ENCODE measurements at regions of chr17 and their contacts with region 1.

Region 1: GRCh38 chr17:47649153-47649971 is at the start of gene KPNB1:
- DNase-seq: peak; percentile 95
- ATAC-seq: peak; percentile 86
- H3K4me3 Mint-ChIP-seq: peak within 1 kb of the TSS; percentile 92
- H3K27ac Mint-ChIP-seq: peak within 1 kb of the TSS; percentile 96
- H3K4me1 Mint-ChIP-seq: peaks cover 37% of the 10 kb centered on the region
- H3K27me3 Mint-ChIP-seq: no peaks in the 10 kb centered on the region
- total RNA-seq, gene KPNB1: 335 TPM

Region 2: DNA sequence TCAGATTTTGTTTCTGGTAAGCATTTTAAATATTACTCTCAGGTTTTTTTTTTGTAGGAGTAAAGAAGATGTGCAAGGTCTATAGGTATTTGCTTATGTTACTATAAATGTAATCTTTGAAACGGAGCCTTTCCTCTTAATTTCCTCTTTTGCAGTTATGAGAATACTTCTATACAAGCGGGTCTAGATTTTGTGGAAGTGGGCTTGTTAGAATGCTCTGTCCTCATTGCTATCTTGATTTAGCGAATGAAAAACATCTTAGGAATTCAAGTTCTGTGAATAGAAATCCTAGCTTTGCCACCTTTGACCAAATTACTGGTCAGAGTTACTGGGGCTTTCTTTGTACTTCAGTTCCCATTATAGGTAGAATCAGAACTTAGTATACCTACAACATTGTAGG is 245.4 kb before region 1 on chr17:
- POLR2A ChIA-PET with region 1: no interaction called
- DNase-seq: no peak
- ATAC-seq: no peak
- H3K4me3 Mint-ChIP-seq: no peak overlapping the region
- H3K27ac Mint-ChIP-seq: no peak overlapping the region
- H3K4me1 Mint-ChIP-seq: no peaks in the 10 kb centered on the region
- H3K27me3 Mint-ChIP-seq: no peaks in the 10 kb centered on the region

Region 3: DNA sequence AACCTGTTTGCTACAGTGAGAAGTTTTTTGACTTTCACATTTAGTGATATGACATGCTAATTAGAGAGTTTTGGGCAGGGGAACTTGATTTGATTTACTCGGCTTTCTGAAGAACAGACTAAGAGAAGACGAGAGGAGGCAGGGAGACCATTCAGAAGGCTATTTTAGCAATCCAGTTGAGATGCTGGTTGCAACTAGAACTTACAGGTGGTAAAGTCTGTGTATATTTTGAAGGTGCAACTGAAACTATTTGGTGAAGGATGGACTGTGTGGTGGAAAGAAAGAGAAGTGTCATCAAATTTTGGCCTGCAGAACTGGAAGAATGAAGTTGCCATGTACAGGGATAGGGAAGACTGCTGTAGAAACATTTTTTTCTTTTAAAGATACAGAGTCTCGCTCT is 41.9 kb before region 1 on chr17:
- POLR2A ChIA-PET with region 1: no interaction called
- DNase-seq: no peak
- ATAC-seq: no peak
- H3K4me3 Mint-ChIP-seq: no peak overlapping the region
- H3K27ac Mint-ChIP-seq: no peak overlapping the region
- H3K4me1 Mint-ChIP-seq: peaks cover 5% of the 10 kb centered on the region
- H3K27me3 Mint-ChIP-seq: no peaks in the 10 kb centered on the region

Region 4: GRCh38 chr17:47633996-47634395 is 15.4 kb before region 1 on chr17:
- POLR2A ChIA-PET with region 1: interaction called, 11 read pairs
- DNase-seq: no peak
- ATAC-seq: peak; percentile 49
- H3K4me3 Mint-ChIP-seq: no peak overlapping the region
- H3K27ac Mint-ChIP-seq: no peak overlapping the region
- H3K4me1 Mint-ChIP-seq: peaks cover 19% of the 10 kb centered on the region
- H3K27me3 Mint-ChIP-seq: no peaks in the 10 kb centered on the region

Region 5: DNA sequence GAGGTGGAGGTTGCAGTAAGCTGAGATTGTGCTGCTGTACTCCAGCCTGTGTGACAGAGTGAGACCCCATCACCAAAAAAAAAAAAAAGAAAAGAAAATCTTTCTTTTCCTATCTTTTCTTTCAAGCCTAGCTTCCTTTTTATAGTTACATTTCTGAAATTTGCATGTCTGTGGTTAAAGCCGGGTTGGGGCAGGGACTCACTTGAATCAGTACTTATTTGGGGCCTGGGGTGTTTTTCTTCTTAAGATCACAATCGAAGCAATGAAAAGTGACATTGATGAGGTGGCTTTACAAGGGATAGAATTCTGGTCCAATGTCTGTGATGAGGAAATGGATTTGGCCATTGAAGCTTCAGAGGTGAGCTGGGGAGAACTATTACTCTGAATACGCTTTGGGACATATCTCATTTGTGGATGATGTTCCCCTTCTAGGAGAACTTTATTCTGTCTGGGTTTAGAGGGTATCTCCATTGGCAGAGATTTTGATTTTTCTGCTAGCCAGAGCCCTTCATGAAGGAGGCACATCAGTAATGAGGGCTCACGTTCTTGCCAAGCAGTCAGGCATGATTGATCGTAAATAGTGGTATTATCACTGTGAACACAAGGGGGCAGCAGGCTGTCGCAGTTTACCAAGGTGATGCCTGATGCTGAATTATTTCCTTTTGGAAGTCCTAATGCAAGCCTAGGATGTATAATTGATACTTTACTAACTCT is 14.7 kb after region 1 on chr17:
- POLR2A ChIA-PET with region 1: interaction called, 39 read pairs
- DNase-seq: peak; percentile 44
- ATAC-seq: peak; percentile 60
- H3K4me3 Mint-ChIP-seq: no peak overlapping the region
- H3K27ac Mint-ChIP-seq: peak overlapping the region; percentile 55
- H3K4me1 Mint-ChIP-seq: peaks cover 33% of the 10 kb centered on the region
- H3K27me3 Mint-ChIP-seq: no peaks in the 10 kb centered on the region

Measured in activated naive CD8-positive, alpha-beta T cell treated with anti-CD3 and anti-CD28 coated beads, Interleukin-2, amount 10 ng/mL, durations not matched to agents 7 days and 5 days (primary cell).